Activated T-helper 1 cell treated with anti-CD3 and anti-CD28 coated beads, Interleukin-12 subunit alpha, Interleukin-12 subunit beta, Interleukin-2, Interleukin-4 antibody, amounts not matched to agents 30 ng/mL and 10 ng/mL and 1 ng/mL, durations not matched to agents 14 hours and 24 hours and 36 hours (primary cell): ENCODE measurements at regions of chr19 and their contacts with region 1.

Region 1: DNA sequence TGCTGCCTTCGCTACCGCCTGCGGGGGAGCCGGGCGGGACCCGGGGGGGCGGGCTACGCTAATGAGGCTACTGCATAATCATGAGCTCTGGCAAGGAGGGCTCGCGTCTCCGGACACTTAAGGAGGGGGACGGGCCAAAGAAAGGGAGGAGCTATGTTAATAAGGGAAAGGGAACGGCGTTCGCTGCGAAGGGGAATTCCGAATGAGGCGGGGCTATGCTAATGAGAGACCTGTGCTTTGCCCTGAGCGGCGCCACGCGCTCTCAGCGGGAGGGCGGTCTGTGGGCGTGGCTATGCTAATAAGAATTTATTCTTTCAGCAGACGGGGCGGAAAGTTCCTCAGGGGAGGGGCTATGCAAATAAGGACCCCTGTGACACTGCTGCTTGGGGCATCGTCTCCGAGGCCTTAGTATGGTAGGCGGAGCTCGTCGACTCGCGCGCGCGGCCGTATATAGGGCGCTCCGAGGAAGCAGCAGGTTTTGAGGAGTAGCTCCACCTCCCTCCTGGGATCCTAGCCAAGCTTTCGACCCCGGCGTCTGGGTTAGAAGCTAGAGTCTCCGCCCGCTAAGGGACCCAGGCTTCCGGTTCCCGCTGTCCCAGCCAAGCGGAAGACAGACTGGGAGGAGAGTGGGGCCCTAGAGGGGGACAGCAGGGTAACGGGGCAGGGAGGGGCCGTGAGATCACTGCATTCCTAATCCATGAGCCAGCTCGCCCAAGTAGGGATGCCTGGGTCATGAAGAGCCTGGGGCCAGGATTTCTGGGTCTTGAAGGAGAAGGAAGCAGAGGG is at the start of gene RRAS:
- DNase-seq: peak; percentile 100
- H3K4me3 Mint-ChIP-seq: peak within 1 kb of the TSS; percentile 94
- H3K27ac Mint-ChIP-seq: peak within 1 kb of the TSS; percentile 99
- H3K4me1 Mint-ChIP-seq: peaks cover 55% of the 10 kb centered on the region
- H3K27me3 Mint-ChIP-seq: no peaks in the 10 kb centered on the region
- total RNA-seq, gene RRAS: 4.4 and 4.7 TPM in 2 replicates

Region 2: GRCh38 chr19:48363810-48364563 is 1276.3 kb before region 1 on chr19 and contains the starts of genes SYNGR4 and TMEM143:
- intact Hi-C with region 1: loop called (anchors 5 kb)
- DNase-seq: peak; percentile 98
- H3K4me3 Mint-ChIP-seq: peak within 1 kb of the TSS; percentile 85
- H3K27ac Mint-ChIP-seq: peak within 1 kb of the TSS; percentile 87
- H3K4me1 Mint-ChIP-seq: peaks cover 6% of the 10 kb centered on the region
- H3K27me3 Mint-ChIP-seq: no peaks in the 10 kb centered on the region
- total RNA-seq, gene SYNGR4: 0.61 TPM in 1 of 2 replicates, not detected in the other
- total RNA-seq, gene TMEM143: 7.7 and 14.9 TPM in 2 replicates

Region 3: GRCh38 chr19:49403404-49404187 is 236.7 kb before region 1 on chr19:
- intact Hi-C with region 1: no loop called
- DNase-seq: no peak
- H3K4me3 Mint-ChIP-seq: no peak overlapping the region
- H3K27ac Mint-ChIP-seq: no peak overlapping the region
- H3K4me1 Mint-ChIP-seq: peaks cover 13% of the 10 kb centered on the region
- H3K27me3 Mint-ChIP-seq: peaks cover 7% of the 10 kb centered on the region

Region 4: DNA sequence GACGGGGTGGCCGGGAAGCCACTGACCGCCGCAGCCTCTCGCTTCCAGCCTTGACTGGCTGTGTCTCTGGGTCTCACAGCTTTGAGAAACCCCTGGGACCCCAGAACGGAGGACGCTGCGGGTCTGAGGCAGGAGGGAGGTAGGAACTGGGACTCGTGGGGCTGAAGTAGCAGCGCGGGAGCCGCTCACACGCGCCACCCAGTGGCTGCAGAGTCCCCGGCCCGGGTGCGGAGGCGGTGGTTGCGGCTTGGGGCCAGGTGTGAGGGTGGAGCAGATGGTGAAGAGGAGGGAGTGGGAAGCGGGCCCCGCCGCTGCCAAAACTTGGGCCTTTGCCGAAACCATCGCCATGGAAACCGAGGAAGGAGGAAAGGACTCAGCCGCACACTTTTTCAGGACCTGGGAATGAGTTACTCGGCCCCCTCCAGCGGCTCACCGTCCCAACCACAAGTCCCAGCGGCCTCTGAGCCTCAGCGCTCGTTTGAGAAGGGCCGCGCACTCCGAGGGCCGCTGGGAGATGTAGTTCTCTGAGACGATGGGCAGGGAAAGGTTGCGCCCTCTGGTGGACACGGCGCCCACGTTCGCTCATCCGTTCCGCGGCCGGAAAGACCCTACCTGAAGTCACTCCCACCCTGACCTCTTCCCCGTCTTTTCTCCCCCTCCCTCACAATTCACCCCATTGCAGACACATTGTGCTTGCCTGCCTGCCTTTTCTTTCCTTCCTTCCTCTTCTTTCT is 196.8 kb before region 1 on chr19:
- intact Hi-C with region 1: loop called (anchors 2 kb)
- DNase-seq: peak; percentile 90
- H3K4me3 Mint-ChIP-seq: peak overlapping the region; percentile 82
- H3K27ac Mint-ChIP-seq: peak overlapping the region; percentile 88
- H3K4me1 Mint-ChIP-seq: peaks cover 42% of the 10 kb centered on the region
- H3K27me3 Mint-ChIP-seq: peaks cover 37% of the 10 kb centered on the region

Region 5: DNA sequence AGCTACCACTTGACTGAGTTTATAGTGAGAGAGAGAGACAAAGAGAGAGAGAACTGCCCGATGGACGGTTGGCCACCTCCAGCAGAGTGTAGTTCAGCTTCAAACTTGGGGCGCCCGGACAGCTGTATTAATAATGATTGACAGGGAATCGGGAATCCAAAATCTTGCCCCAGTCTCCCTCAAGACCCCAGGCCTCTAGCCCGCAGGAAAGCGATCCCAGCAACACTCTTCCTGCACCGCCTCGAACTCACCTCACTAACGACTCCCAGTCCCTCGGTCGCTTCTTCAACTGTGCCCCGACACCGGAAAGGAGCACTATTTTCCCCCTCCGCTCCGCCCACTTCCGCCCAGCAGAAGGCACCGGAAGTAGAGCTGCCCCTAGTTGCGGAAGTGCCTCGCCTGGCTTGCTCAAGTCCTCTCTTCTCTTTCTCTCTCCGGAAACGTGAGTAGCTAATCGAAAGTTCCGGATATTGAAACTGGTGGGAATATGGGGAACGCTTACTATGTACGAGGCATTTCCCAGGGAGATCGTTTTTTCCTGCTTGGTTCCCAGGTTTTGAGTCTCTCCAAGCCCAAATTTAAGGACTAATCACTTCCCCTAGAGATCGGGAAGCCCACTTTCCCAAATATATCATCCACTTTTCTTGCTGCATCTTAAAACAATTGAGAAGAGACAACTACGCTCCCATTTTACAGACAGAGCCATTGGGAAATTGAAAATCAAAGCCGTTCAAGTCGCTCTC is 59.9 kb before region 1 on chr19 and contains the start of gene NOSIP:
- intact Hi-C with region 1: loop called (anchors 1 kb)
- DNase-seq: peak; percentile 94
- H3K4me3 Mint-ChIP-seq: peak within 1 kb of the TSS; percentile 93
- H3K27ac Mint-ChIP-seq: peak within 1 kb of the TSS; percentile 86
- H3K4me1 Mint-ChIP-seq: peaks cover 30% of the 10 kb centered on the region
- H3K27me3 Mint-ChIP-seq: no peaks in the 10 kb centered on the region
- total RNA-seq, gene NOSIP: 72.1 and 77.5 TPM in 2 replicates

Region 6: GRCh38 chr19:49766007-49766937 is 126.0 kb after region 1 on chr19:
- intact Hi-C with region 1: loop called (anchors 1 kb)
- DNase-seq: peak; percentile 99
- H3K4me3 Mint-ChIP-seq: peak overlapping the region; percentile 89
- H3K27ac Mint-ChIP-seq: peak overlapping the region; percentile 91
- H3K4me1 Mint-ChIP-seq: peaks cover 24% of the 10 kb centered on the region
- H3K27me3 Mint-ChIP-seq: no peaks in the 10 kb centered on the region

Region 7: DNA sequence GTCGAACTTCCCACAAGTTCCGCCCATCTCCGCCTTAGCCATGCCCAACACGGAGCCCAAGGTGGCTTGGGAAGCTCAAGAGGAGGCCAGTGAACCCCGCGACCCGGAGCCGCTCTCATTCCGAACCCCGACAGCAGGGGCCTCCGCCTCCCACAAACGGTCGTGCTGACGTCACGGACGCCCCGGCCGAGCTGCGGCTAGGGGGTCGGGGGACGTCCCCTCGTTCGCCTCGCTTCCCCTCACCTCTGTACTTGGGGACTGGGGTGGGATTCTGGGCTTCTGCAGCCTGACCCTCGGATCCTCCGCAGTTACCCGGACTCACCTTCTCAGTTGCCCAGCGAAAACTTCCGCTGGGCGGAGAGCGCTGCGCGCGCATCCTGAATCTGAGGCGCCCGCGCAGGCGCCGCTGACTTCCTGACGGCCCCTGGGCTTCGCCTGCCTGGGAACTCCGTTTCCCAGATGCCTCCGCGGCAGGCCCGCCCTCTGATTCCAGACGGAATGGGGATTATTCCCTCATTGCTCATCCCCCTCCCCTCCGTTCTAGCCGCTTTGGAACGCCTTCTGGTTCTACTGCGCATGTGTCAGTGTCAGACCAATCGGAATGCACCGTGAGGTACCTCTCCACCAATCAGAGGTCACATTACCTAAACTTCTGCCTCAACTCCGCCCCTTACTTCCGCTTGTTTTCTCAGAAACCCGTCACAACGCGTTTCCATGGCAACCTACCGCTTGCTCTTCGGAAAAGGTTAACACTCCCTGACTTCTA is 384.9 kb after region 1 on chr19 and contains the start of gene VRK3:
- intact Hi-C with region 1: loop called (anchors 1 kb)
- DNase-seq: peak; percentile 99
- H3K4me3 Mint-ChIP-seq: peak within 1 kb of the TSS; percentile 93
- H3K27ac Mint-ChIP-seq: peak within 1 kb of the TSS; percentile 99
- H3K4me1 Mint-ChIP-seq: peaks cover 40% of the 10 kb centered on the region
- H3K27me3 Mint-ChIP-seq: peaks cover 6% of the 10 kb centered on the region
- total RNA-seq, gene VRK3: 66.7 and 69.4 TPM in 2 replicates